ENCODE measurements at regions of chr6 and their contacts with region 1.

Region 1: DNA sequence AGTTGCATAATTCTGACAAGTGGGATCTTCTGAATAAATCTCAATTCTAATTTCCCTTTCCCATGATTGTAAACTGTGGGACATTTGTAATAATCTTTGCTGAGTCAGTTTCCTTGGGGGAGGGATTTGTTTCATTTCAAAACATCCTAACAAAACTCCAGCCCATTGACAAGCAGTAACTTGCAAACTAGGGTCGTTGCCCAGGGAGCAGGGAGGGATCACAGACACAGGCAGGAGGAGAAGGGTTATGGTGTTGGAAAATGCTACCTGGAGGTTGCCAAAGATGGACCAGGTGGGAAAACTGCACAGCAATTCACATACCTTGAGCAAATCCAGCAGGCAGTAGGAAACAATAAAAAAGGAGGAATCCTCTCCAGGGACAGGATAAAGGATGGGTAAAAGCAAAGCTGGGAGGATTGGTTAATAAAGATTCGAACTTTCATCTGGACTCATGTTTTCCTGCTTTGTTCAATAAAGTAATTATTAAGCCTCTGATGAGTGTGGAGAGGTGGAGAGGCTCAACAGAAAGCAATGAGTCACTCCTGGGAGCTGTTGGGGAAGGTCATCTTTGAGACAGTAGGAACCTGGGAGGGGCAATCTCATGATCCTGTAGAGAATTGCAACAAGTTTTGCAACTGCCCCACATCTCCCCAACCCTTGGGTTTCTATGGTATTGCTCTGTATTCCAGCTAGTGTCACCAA is 87.3 kb upstream of the AKIRIN2 start:
- DNase-seq: peak; percentile 46
- ATAC-seq: peak; percentile 71
- H3K4me3 ChIP-seq: no peak overlapping the region
- H3K27ac ChIP-seq: peak overlapping the region; percentile 17; the same call in 1 of the 2 replicates
- H3K4me1 ChIP-seq: peaks cover 8% of the 10 kb centered on the region
- H3K27me3 ChIP-seq: peaks cover 2% of the 10 kb centered on the region; the same call in 1 of the 2 replicates
- CTCF ChIP-seq: no peak
- POLR2A ChIP-seq: no peak
- RAD21 ChIP-seq: no peak

Region 2: GRCh38 chr6:87772597-87773530 is 16.5 kb before region 1 on chr6:
- CTCF ChIA-PET with region 1: interaction called, 8 read pairs
- POLR2A ChIA-PET with region 1: interaction called, 4 read pairs
- dilution Hi-C with region 1: no loop called
- in situ Hi-C with region 1: no loop called
- intact Hi-C with region 1: loop called (anchors 2 kb)
- DNase-seq: peak; percentile 59
- ATAC-seq: peak; percentile 86
- H3K4me3 ChIP-seq: no peak overlapping the region
- H3K27ac ChIP-seq: peak overlapping the region; percentile 40; the same call in 1 of the 2 replicates
- H3K4me1 ChIP-seq: peaks cover 14% of the 10 kb centered on the region
- H3K27me3 ChIP-seq: no peaks in the 10 kb centered on the region
- CTCF ChIP-seq: no peak
- POLR2A ChIP-seq: no peak
- RAD21 ChIP-seq: no peak

Measured in IMR-90 (cell line).